Activated naive CD8-positive, alpha-beta T cell treated with anti-CD3 and anti-CD28 coated beads, Interleukin-2, amount 10 ng/mL, durations not matched to agents 7 days and 5 days (primary cell): ENCODE measurements at regions of chr9 and their contacts with region 1.

Region 1: GRCh38 chr9:137306048-137306849 is 4.2 kb upstream of the NRARP start:
- DNase-seq: no peak
- ATAC-seq: peak; percentile 5
- H3K4me3 Mint-ChIP-seq: peak overlapping the region; percentile 37
- H3K27ac Mint-ChIP-seq: peak overlapping the region; percentile 42
- H3K4me1 Mint-ChIP-seq: peaks cover 4% of the 10 kb centered on the region
- H3K27me3 Mint-ChIP-seq: peaks cover 3% of the 10 kb centered on the region

Region 2: GRCh38 chr9:137277329-137278041 is 28.8 kb before region 1 on chr9 and contains the start of gene TOR4A:
- POLR2A ChIA-PET with region 1: no interaction called
- DNase-seq: peak; percentile 70
- ATAC-seq: peak; percentile 68
- H3K4me3 Mint-ChIP-seq: peak within 1 kb of the TSS; percentile 92
- H3K27ac Mint-ChIP-seq: peak within 1 kb of the TSS; percentile 83
- H3K4me1 Mint-ChIP-seq: peaks cover 2% of the 10 kb centered on the region
- H3K27me3 Mint-ChIP-seq: no peaks in the 10 kb centered on the region
- total RNA-seq, gene TOR4A: 8.1 to 8.2 TPM

Region 3: DNA sequence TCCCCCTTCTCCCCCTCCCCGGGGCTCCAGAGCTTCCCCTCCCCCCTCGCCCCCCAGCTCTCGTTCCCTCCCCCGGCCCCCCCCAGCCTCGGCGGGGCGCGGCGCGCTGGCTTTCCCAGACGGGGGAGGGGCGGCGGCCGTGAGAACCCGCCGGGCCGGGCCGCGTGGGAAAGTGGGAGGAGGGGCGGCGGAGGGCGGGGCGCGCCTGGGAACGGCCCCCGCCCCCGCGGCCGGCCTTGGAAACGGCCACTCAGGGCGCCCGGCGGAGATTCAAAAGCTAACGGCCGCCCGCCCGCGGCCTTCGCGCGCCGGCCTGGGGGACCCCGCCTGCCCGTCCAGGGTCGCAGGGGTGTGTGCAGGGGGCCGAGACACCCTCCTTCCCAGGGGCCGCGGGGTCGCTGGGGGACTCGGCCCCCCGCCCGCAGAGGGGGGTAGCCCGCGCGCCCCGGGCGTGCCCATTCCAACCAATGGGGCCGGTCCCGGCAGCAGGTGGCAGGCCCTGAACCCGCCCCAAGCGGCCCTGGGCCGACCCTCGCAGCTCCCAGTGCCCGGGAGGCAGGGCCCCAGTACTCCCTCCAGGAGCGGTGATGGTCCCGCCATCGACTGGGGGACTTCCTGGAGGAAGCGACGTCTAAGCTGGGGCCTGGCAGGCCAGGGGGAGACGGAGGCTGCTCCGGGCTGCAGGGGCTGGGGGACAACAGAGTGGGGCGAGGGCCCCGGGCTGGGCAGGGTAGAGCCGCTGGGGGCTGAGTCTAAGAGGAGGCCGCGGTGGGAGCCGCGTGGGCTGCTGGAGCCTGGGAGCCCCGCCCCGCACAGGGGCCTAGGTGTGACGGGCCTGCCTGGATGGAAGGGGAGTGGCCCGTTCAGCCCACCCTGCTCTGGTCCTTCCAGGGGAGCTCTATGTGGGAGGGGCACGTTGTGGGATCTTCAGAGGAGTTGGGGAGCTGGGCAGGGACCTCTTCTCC is 10.0 kb after region 1 on chr9:
- POLR2A ChIA-PET with region 1: interaction called, 16 read pairs
- DNase-seq: peak; percentile 67
- ATAC-seq: peak; percentile 46
- H3K4me3 Mint-ChIP-seq: peak overlapping the region; percentile 61
- H3K27ac Mint-ChIP-seq: peak overlapping the region; percentile 75
- H3K4me1 Mint-ChIP-seq: peaks cover 9% of the 10 kb centered on the region
- H3K27me3 Mint-ChIP-seq: no peaks in the 10 kb centered on the region